GM18951 (cell line): ENCODE measurements at regions of chr21 and their contacts with region 1.

Region 1: GRCh38 chr21:33451634-33452071 is 28.1 kb downstream of the TMEM50B start:
- POLR2A ChIP-seq: no peak

Region 2: GRCh38 chr21:32826329-32827167 is 625.1 kb before region 1 on chr21:
- in situ Hi-C with region 1: loop called (anchors 25 kb)
- POLR2A ChIP-seq: no peak